ENCODE measurements at regions of chr1 and their contacts with region 1.

Region 1: DNA sequence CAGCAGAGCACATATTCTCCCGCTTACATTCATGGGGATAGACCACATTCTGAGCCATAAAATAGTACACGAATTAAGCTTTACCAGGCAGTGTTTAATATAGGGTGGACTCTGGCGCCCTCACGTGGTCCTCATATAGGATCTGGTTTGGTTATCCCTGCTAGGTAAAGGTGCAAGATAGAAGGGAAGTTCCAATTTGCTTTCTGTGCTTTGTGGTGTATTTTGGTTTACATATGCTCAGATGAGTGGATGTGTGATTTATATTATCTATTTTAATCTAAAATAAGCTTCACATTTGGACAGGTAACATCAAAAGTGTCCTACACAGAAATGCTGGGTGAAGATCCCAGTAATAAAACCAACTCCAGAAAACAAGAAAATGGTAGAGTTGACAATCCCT is 3.6 kb downstream of the CR1 start:
- DNase-seq: peak in 1 of 2 experiments; percentile 56
- H3K4me3 ChIP-seq: no peak overlapping the region
- H3K27ac ChIP-seq: no peak overlapping the region
- H3K4me1 ChIP-seq: peaks cover 0 to 6% (median 3%) of the 10 kb centered on the region in 4 experiments; a peak in 5 of 7 replicates
- H3K27me3 ChIP-seq: peaks cover 4 to 23% (median 19%) of the 10 kb centered on the region in 4 experiments; a peak in 6 of 7 replicates
- CTCF ChIP-seq: peak in 2 of 3 experiments; percentile 79; a peak in 3 of 4 replicates
- EP300 ChIP-seq: no peak
- POLR2A ChIP-seq: no peak
- RAD21 ChIP-seq: peak; percentile 96 to 97

Region 2: GRCh38 chr1:207084701-207085180 is 414.8 kb before region 1 on chr1:
- CTCF ChIA-PET with region 1: interaction called, 10 read pairs
- POLR2A ChIA-PET with region 1: no interaction called
- DNase-seq: peak; percentile 27 to 57
- H3K4me3 ChIP-seq: no peak overlapping the region
- H3K27ac ChIP-seq: no peak overlapping the region
- H3K4me1 ChIP-seq: peaks cover 0 to 3% (median 0%) of the 10 kb centered on the region in 4 experiments; a peak in 2 of 7 replicates
- H3K27me3 ChIP-seq: no peaks in the 10 kb centered on the region
- CTCF ChIP-seq: peak; percentile 39 to 72 (median 71)
- EP300 ChIP-seq: no peak
- POLR2A ChIP-seq: no peak
- RAD21 ChIP-seq: peak; percentile 71 to 74

Region 3: GRCh38 chr1:207344221-207344620 is 155.4 kb before region 1 on chr1:
- CTCF ChIA-PET with region 1: no interaction called
- POLR2A ChIA-PET with region 1: no interaction called
- DNase-seq: no peak
- H3K4me3 ChIP-seq: no peak overlapping the region
- H3K27ac ChIP-seq: no peak overlapping the region
- H3K4me1 ChIP-seq: no peaks in the 10 kb centered on the region; a peak in 1 of 7 replicates
- H3K27me3 ChIP-seq: no peaks in the 10 kb centered on the region
- CTCF ChIP-seq: no peak
- EP300 ChIP-seq: no peak
- POLR2A ChIP-seq: no peak
- RAD21 ChIP-seq: no peak

Region 4: GRCh38 chr1:207486198-207486597 is 13.4 kb before region 1 on chr1:
- CTCF ChIA-PET with region 1: interaction called, 20 read pairs
- POLR2A ChIA-PET with region 1: no interaction called
- DNase-seq: no peak
- H3K4me3 ChIP-seq: no peak overlapping the region
- H3K27ac ChIP-seq: no peak overlapping the region
- H3K4me1 ChIP-seq: no peaks in the 10 kb centered on the region
- H3K27me3 ChIP-seq: no peaks in the 10 kb centered on the region
- CTCF ChIP-seq: no peak
- EP300 ChIP-seq: no peak
- POLR2A ChIP-seq: no peak
- RAD21 ChIP-seq: no peak

Region 5: DNA sequence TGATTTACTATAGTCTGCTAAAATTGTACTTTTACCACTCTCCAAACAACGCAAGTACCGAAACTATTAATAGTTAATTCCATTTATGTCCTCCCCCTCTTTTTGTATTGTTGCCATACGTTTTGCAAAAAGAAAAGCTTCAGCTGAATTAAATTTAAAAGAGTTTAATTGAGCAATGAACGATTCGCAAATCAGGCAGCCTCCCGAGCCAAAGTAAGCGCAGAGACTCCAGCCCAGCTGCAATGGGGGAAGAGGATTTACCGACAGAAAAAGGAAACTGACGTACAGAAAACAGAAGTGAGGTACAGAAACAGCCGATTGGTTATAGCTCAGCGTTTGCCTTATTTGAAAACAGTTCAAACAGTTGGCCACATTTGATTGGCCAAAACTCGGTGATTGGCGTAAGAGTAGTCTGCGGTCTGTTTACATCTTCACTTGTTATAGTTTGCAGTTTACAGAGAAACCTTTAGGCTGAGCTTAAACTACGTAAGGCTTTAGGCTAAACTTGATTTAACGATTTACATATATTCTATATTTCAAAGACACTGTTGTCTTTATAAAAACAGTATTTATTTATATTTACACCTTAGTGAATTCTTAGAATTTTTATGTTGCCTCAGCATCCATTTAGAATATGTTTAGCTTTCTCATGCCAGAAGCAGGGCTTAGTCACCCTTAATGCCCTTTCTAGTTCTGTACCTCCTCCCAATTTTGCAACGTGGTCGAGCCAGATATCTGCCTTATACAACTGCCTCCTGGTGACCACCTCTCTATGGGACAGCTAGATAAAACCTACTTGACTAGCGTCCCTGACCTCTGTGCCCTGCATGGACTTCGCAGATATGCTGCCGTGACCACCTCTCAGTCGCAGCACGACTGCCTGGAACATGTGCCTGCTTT is 20.2 kb after region 1 on chr1:
- CTCF ChIA-PET with region 1: interaction called, 10 read pairs
- POLR2A ChIA-PET with region 1: no interaction called
- DNase-seq: no peak
- H3K4me3 ChIP-seq: no peak overlapping the region
- H3K27ac ChIP-seq: no peak overlapping the region
- H3K4me1 ChIP-seq: no peaks in the 10 kb centered on the region
- H3K27me3 ChIP-seq: no peaks in the 10 kb centered on the region
- CTCF ChIP-seq: no peak
- EP300 ChIP-seq: no peak
- POLR2A ChIP-seq: no peak
- RAD21 ChIP-seq: no peak